ENCODE measurements at regions of chr19 and their contacts with region 1.

Region 1: DNA sequence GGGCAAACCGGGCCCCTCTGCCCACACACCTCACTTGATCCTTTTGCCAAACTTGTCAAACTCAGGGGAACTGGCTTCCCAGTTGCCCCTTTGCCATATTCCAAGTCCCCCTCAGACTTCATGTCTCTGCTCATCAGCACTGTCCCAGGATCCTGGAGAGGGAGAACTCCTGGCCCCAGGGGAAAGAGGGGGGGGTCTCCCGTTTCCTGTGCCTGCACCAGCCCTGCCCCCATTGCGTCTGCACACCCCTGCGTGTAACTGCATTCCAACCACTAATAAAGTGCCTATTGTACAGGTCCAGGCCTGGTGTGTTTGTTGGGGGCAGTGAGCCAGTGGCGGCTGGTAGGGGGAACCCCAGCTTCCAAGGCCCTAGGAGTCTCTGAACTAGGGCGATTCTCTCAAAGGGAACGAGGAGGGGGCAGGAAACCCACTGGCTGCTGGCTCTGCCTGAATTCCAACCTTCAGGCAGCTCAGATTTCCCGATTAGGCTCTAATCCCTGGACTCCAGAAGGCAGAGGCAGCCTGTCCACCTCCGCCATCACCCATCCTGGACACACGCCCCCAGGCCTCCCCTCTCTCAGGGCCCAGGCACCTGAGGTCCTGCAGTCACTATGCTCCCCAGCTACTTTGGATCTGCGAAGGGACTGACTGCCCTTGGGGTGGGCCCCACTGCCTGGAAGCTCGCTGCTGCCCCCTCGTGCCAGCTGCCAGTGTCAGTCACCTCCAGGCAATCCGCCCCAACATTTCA is 9.7 kb upstream of the ILF3 start:
- DNase-seq: peak; percentile 93
- ATAC-seq: peak; percentile 91
- H3K4me3 Mint-ChIP-seq: peak overlapping the region; percentile 14; the same call in 1 of the 2 replicates
- H3K27ac Mint-ChIP-seq: peak overlapping the region; percentile 93
- H3K4me1 Mint-ChIP-seq: peaks cover 31% of the 10 kb centered on the region
- H3K27me3 Mint-ChIP-seq: no peaks in the 10 kb centered on the region
- CTCF ChIP-seq: peak; percentile 61; the same call in 1 of the 2 replicates

Region 2: DNA sequence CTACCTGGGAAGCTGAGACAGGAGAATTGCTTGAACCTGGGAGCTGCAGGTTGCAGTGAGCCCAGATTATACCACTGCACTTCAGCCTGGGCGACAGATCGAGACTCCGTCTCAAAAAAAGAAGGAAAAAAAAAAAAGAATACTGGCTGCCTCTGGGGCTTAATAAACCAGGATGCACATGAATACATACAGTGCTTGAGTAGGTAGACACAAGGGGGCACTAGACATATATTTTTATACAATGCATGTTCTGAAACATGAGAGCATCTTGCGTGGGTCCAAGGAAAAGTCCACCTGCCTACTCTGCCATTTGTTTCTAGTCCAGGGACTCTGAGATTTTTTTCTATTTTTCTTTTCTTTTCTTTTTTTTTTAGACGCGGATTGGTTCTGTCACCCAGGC is 172.5 kb before region 1 on chr19:
- CTCF ChIA-PET with region 1: no interaction called
- POLR2A ChIA-PET with region 1: no interaction called
- DNase-seq: no peak
- ATAC-seq: no peak
- H3K4me3 Mint-ChIP-seq: no peak overlapping the region
- H3K27ac Mint-ChIP-seq: no peak overlapping the region
- H3K4me1 Mint-ChIP-seq: peaks cover 18% of the 10 kb centered on the region
- H3K27me3 Mint-ChIP-seq: peaks cover 7% of the 10 kb centered on the region; the same call in 1 of the 2 replicates
- CTCF ChIP-seq: no peak

Region 3: DNA sequence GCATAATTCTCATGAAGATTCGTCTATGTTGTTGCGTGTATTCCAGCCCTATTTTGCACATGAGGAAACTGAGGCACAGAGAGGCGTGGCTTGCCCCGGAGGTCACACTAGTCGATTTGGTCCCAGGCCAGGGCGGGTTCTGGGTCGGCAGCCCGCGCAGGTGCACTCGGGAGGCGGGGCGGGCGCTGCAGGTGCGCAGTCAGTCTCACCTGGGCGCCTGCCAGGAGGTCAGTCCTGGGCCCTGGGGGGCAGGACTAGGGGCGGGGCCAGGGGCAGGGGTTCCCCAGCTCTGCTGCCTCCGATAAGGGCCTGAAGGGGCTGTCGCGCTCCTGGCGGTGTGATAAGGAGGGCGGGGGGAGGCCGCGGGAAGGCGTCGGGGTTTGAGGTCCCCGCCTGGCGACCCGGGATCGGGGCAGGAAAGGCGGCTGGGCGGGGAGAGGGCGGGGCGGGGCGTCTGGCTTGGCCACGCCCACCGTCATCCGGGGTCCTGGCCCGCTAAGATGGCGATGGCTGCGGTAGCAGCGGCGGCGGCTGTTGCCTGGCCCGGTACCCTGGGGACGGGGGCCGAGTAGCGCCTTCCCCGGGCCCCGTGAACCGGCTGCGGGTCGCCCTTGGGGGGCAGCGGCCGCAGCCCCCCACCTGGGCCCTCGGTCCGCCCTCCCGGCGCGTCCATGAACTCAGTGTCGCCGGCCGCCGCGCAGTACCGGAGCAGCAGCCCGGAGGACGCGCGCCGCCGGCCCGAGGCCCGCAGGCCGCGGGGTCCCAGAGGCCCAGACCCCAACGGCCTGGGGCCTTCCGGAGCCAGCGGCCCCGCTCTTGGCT is 100.8 kb before region 1 on chr19 and contains the start of gene ATG4D:
- CTCF ChIA-PET with region 1: interaction called, 14 read pairs
- POLR2A ChIA-PET with region 1: no interaction called
- DNase-seq: peak; percentile 92
- ATAC-seq: peak; percentile 87
- H3K4me3 Mint-ChIP-seq: peak within 1 kb of the TSS; percentile 83
- H3K27ac Mint-ChIP-seq: peak within 1 kb of the TSS; percentile 93
- H3K4me1 Mint-ChIP-seq: peaks cover 4% of the 10 kb centered on the region; the same call in 1 of the 2 replicates
- H3K27me3 Mint-ChIP-seq: peaks cover 6% of the 10 kb centered on the region
- CTCF ChIP-seq: no peak
- total RNA-seq, gene ATG4D: 50.3 to 59.4 TPM (median 53.8 TPM) in 3 replicates

Region 4: DNA sequence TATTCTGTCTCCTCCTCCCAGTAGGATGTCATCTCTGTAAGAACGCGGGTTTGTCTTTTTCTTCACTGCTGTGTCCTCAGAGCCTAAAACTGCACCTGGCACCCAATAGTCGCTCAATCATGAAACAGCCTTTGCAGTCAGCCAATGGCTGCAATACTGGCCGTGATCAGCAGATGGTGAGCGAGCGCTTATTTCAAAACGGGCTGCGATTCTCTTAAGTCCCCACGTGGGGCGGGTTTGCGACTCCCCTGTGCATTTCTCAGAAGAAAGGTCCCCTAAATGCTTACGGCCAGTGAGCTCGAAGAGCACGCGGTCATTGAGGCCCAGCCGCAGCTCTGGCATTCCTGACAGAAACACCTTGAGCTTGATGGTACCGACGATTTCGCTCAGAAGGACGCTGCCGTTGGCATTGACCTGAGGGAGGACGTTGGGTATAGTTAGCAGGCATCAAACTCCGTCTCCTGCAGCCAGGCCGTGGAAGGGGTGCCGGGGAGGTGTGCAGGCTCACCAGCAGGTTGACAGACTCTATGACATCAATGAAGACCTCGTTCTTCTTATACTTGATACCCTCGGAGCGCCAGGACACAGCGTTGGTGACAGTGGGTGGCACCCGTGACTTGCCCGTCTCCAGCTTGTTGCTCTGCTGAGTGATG is 63.3 kb before region 1 on chr19:
- CTCF ChIA-PET with region 1: interaction called, 276 read pairs
- POLR2A ChIA-PET with region 1: interaction called, 7 read pairs
- DNase-seq: peak; percentile 94
- ATAC-seq: peak; percentile 91
- H3K4me3 Mint-ChIP-seq: no peak overlapping the region
- H3K27ac Mint-ChIP-seq: peak overlapping the region; percentile 84
- H3K4me1 Mint-ChIP-seq: peaks cover 5% of the 10 kb centered on the region
- H3K27me3 Mint-ChIP-seq: no peaks in the 10 kb centered on the region
- CTCF ChIP-seq: peak; percentile 96

Region 5: GRCh38 chr19:10593820-10594637 is 50.4 kb before region 1 on chr19:
- CTCF ChIA-PET with region 1: interaction called, 10 read pairs
- POLR2A ChIA-PET with region 1: no interaction called
- DNase-seq: no peak
- ATAC-seq: no peak
- H3K4me3 Mint-ChIP-seq: no peak overlapping the region
- H3K27ac Mint-ChIP-seq: no peak overlapping the region
- H3K4me1 Mint-ChIP-seq: no peaks in the 10 kb centered on the region
- H3K27me3 Mint-ChIP-seq: no peaks in the 10 kb centered on the region
- CTCF ChIP-seq: no peak

Region 6: DNA sequence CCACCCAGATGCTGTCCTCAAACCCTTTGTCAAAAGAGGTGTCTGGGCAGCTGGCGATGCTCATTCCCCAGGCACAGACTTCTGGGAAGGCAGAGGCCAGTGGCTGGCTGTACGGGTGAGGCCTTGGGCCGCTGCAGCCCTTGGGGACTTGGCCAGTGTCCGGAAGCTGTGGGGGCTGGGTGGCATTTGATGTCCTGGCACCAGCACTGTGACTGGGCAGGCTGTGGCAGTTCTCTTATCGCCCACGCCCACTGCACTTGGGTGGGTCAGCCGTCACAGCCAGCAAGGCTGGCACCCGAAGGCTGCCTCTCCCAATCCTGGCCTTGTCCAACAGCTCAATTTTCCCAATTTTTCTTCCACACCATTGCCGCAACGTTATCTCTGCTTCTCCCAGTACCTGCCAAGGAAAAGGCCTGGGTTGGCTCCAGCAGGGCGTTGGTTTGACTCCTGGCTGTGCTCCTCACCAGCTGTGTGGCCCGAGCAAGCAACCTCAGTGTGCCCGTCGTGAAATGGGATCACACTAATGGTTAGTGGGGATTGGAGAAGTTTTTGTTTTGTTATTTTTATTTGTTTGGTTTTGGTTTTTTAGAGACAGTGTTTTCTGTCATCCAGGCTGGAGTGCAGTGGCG is 31.8 kb before region 1 on chr19:
- CTCF ChIA-PET with region 1: interaction called, 11 read pairs
- POLR2A ChIA-PET with region 1: no interaction called
- DNase-seq: no peak
- ATAC-seq: no peak
- H3K4me3 Mint-ChIP-seq: no peak overlapping the region
- H3K27ac Mint-ChIP-seq: no peak overlapping the region
- H3K4me1 Mint-ChIP-seq: no peaks in the 10 kb centered on the region
- H3K27me3 Mint-ChIP-seq: no peaks in the 10 kb centered on the region
- CTCF ChIP-seq: no peak

Region 7: GRCh38 chr19:10690341-10690781 is 45.9 kb after region 1 on chr19:
- CTCF ChIA-PET with region 1: interaction called, 10 read pairs
- POLR2A ChIA-PET with region 1: no interaction called
- DNase-seq: no peak
- ATAC-seq: no peak
- H3K4me3 Mint-ChIP-seq: no peak overlapping the region
- H3K27ac Mint-ChIP-seq: peak overlapping the region; percentile 19; the same call in 1 of the 2 replicates
- H3K4me1 Mint-ChIP-seq: peaks cover 16% of the 10 kb centered on the region
- H3K27me3 Mint-ChIP-seq: no peaks in the 10 kb centered on the region
- CTCF ChIP-seq: no peak

Region 8: GRCh38 chr19:10701955-10702525 is 57.6 kb after region 1 on chr19:
- CTCF ChIA-PET with region 1: interaction called, 27 read pairs
- POLR2A ChIA-PET with region 1: no interaction called
- DNase-seq: peak; percentile 64
- ATAC-seq: peak; percentile 76
- H3K4me3 Mint-ChIP-seq: peak overlapping the region; percentile 87
- H3K27ac Mint-ChIP-seq: peak overlapping the region; percentile 71
- H3K4me1 Mint-ChIP-seq: peaks cover 5% of the 10 kb centered on the region; the same call in 1 of the 2 replicates
- H3K27me3 Mint-ChIP-seq: peaks cover 5% of the 10 kb centered on the region
- CTCF ChIP-seq: no peak

Region 9: DNA sequence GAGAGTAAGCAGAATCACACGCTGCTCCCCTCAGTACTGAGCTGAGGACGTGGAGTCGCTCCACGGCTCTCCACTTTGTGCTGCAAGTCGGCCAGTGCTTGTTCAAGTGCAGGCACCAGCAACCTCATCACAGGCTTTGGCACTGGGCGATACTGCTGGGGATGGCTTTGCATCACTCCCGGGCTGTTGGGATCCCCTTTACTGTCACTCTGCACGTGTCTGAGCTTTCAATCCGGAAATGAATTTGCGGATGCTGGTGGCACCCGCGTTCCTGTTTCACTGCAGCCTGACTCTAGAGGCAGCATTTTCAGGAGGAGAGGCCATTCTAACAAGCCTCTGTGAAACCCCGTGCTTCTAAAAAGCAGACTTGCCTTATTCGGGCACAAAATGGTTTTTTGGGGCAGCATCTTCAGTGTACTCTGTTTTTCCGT is 335.5 kb after region 1 on chr19:
- CTCF ChIA-PET with region 1: no interaction called
- POLR2A ChIA-PET with region 1: no interaction called
- DNase-seq: no peak
- ATAC-seq: no peak
- H3K4me3 Mint-ChIP-seq: no peak overlapping the region
- H3K27ac Mint-ChIP-seq: peak overlapping the region; percentile 92
- H3K4me1 Mint-ChIP-seq: peaks cover 23% of the 10 kb centered on the region
- H3K27me3 Mint-ChIP-seq: no peaks in the 10 kb centered on the region
- CTCF ChIP-seq: no peak